ENCODE measurements at regions of chr7 and their contacts with region 1.

Region 1: DNA sequence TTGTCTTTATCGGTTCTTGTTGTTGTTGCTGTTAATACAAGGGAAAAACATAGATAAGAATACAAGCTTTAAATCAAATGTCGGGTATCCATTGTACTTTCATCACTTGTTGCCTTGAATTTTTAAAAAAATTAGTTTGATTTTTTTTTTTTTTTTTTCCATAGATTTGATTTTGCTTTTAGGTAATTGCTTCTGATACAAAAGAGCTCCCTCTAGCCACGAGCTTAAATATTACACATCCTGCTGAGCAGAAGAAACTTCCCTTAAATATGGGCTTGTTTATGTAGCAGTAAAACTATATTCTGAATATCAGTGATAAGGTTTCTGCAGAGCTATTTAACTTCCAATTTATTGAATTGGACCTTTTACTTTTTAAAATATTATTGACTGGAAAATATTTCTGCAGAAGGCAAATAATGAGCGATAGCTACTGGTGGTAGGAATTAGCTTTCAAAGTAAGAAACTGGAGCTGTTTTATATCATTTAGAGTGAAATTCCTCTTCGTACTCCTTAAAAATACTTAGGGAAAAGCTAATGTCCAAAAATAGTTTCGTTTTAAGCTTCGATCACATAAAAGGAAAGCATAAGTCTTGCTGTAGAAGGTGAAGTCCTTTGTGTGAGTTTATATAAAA is 216.9 kb downstream of the POLR1F start:
- DNase-seq: peak in 1 of 2 experiments; percentile 21
- H3K4me3 ChIP-seq: 0 out of 2 replicates have a peak overlapping the region, but pooled peaks have one; percentile 11
- H3K27ac ChIP-seq: no peak overlapping the region
- H3K4me1 ChIP-seq: no peaks in the 10 kb centered on the region
- H3K27me3 ChIP-seq: no peaks in the 10 kb centered on the region
- CTCF ChIP-seq: peak; percentile 88

Region 2: DNA sequence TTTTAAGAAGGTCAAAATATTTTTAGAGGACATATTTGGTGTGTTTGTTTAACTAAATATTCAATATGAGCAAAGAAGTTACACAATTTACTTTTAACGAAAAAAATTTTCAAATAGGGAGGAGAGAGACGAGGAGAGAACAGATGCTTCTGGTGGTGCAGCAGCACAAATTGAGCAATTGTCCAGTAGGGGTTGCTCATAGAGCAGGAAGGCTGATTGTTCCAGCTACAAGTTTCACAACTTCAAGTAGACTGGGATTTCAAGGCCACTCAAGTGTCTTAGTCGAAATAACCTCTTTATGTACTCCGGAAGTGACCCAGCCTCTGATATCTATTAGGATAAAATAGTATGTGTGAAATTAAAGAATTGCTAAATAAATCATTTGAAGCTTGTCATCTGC is 798.5 kb before region 1 on chr7:
- CTCF ChIA-PET with region 1: interaction called, 14 read pairs
- POLR2A ChIA-PET with region 1: no interaction called
- intact Hi-C with region 1: no loop called
- DNase-seq: no peak
- H3K4me3 ChIP-seq: no peak overlapping the region
- H3K27ac ChIP-seq: no peak overlapping the region
- H3K4me1 ChIP-seq: no peaks in the 10 kb centered on the region
- H3K27me3 ChIP-seq: no peaks in the 10 kb centered on the region
- CTCF ChIP-seq: peak; percentile 58

Region 3: DNA sequence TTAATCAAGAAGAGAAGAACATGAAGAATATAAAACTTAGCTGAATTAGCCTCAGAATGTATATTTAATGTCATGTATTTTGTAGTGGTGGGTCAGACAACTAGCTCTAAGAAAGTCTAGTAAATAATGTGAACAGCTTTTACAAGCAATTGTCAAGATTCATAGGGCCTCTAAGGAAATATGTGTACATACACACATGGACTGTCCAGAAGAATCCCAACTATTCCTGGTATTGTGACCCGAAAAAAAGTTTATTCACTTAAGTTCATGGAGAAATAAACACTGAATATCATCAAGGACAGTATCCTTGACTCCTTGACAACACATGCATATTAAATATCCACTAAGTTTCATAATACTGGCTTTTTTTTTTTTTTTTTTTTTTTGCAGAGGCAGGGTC is 363.1 kb before region 1 on chr7:
- CTCF ChIA-PET with region 1: interaction called, 20 read pairs
- POLR2A ChIA-PET with region 1: no interaction called
- intact Hi-C with region 1: no loop called
- DNase-seq: no peak
- H3K4me3 ChIP-seq: no peak overlapping the region
- H3K27ac ChIP-seq: no peak overlapping the region
- H3K4me1 ChIP-seq: no peaks in the 10 kb centered on the region
- H3K27me3 ChIP-seq: no peaks in the 10 kb centered on the region
- CTCF ChIP-seq: no peak

Region 4: DNA sequence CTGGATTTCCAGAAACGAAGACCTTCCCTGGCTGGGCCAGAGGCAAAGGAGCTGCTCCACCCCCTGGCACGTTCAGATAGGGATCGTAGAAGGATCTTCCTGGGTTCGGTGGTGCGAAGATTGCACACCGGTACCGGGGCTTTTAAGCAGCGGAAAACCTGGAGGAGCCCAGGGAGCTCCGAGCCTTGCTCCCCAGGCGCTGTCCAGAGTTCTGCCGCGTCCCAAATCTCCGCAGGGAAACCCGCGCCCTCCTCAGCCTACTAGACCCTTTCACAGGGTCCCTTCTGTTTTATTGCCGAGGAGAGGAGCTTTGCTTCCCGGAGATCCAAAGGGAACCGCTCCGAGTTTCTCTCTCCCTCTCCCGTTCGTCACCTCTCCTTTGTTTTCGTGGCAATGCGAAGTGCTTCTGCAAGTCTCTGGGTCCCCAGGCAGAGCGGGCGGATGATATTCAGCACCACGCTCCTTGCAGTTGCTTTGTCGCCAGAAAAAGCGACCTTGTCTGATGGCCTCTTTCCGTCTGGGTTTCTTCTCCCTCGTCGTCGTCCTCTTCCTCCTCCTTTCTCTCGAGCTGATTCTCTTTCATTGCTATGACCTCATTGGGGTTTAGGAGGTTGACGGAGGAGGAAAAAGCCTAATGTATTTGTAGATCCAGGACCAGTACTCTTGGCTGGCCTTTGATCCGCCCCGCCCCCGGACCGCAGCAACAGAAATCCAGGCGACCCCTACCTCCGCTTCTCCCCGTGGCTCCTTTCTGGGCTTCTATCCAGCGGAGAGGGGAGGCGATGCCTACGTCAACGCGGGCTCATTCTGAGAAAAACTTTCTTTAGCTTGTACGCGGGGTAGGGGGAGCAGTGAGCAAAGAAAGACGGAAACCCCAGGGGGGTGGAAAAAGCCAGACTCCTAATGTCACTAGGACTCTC is 281.2 kb after region 1 on chr7 and contains the start of gene TMEM196:
- CTCF ChIA-PET with region 1: interaction called, 13 read pairs
- POLR2A ChIA-PET with region 1: no interaction called
- intact Hi-C with region 1: no loop called
- DNase-seq: no peak
- H3K4me3 ChIP-seq: no peak within 1 kb of the TSS
- H3K27ac ChIP-seq: no peak within 1 kb of the TSS
- H3K4me1 ChIP-seq: no peaks in the 10 kb centered on the region
- H3K27me3 ChIP-seq: no peaks in the 10 kb centered on the region
- CTCF ChIP-seq: no peak
- total RNA-seq, gene TMEM196: not detected in 2 replicates

Measured in PC-9 (cell line).